Caco-2 (cell line): ENCODE measurements at regions of chr18 and their contacts with region 1.

Region 1: GRCh38 chr18:42053188-42053781 is 98.3 kb downstream of the PIK3C3 start:
- DNase-seq: peak in 1 of 2 experiments; percentile 22
- H3K4me3 ChIP-seq: no peak overlapping the region
- H3K4me3 Mint-ChIP-seq: no peak overlapping the region
- H3K27ac Mint-ChIP-seq: no peak overlapping the region
- H3K4me1 ChIP-seq: no peaks in the 10 kb centered on the region
- H3K4me1 Mint-ChIP-seq: no peaks in the 10 kb centered on the region
- H3K27me3 ChIP-seq: no peaks in the 10 kb centered on the region
- H3K27me3 Mint-ChIP-seq: no peaks in the 10 kb centered on the region
- CTCF ChIP-seq: peak; percentile 48 to 57

Region 2: GRCh38 chr18:42274488-42275137 is 221.3 kb after region 1 on chr18:
- CTCF ChIA-PET with region 1: no interaction called
- POLR2A ChIA-PET with region 1: no interaction called
- intact Hi-C with region 1: loop called (anchors 2 kb)
- DNase-seq: peak; percentile 31 to 32
- H3K4me3 ChIP-seq: no peak overlapping the region
- H3K4me3 Mint-ChIP-seq: no peak overlapping the region
- H3K27ac Mint-ChIP-seq: no peak overlapping the region
- H3K4me1 ChIP-seq: no peaks in the 10 kb centered on the region
- H3K4me1 Mint-ChIP-seq: peaks cover 7% of the 10 kb centered on the region
- H3K27me3 ChIP-seq: no peaks in the 10 kb centered on the region
- H3K27me3 Mint-ChIP-seq: no peaks in the 10 kb centered on the region
- CTCF ChIP-seq: peak in 1 of 2 experiments; percentile 22

Region 3: DNA sequence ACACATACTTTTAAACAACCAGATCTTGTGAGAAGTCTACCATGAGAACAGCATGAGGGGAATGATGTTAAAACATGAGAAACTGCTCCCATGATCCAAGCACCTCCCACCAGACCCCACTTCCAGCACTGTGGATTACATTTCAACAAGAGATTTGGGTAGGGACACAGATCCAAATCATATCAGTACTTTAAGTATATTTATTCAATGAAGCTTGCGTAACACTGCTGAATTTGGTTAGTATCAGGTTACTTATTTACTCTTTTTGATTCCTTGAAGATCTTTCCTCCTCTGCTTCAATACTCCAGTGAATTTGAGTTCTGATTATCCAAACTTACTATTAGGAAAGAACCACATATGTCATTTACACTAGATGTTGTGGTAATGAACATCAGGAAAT is 320.3 kb after region 1 on chr18:
- CTCF ChIA-PET with region 1: no interaction called
- POLR2A ChIA-PET with region 1: no interaction called
- intact Hi-C with region 1: no loop called
- DNase-seq: no peak
- H3K4me3 ChIP-seq: no peak overlapping the region
- H3K4me3 Mint-ChIP-seq: no peak overlapping the region
- H3K27ac Mint-ChIP-seq: no peak overlapping the region
- H3K4me1 ChIP-seq: no peaks in the 10 kb centered on the region
- H3K4me1 Mint-ChIP-seq: no peaks in the 10 kb centered on the region
- H3K27me3 ChIP-seq: no peaks in the 10 kb centered on the region
- H3K27me3 Mint-ChIP-seq: no peaks in the 10 kb centered on the region
- CTCF ChIP-seq: no peak

Region 4: GRCh38 chr18:43271593-43272432 is 1218.5 kb after region 1 on chr18:
- CTCF ChIA-PET with region 1: no interaction called
- POLR2A ChIA-PET with region 1: no interaction called
- intact Hi-C with region 1: loop called (anchors 5 kb)
- DNase-seq: peak in 1 of 2 experiments; percentile 28
- H3K4me3 ChIP-seq: no peak overlapping the region
- H3K4me3 Mint-ChIP-seq: no peak overlapping the region
- H3K27ac Mint-ChIP-seq: no peak overlapping the region
- H3K4me1 ChIP-seq: no peaks in the 10 kb centered on the region
- H3K4me1 Mint-ChIP-seq: no peaks in the 10 kb centered on the region
- H3K27me3 ChIP-seq: no peaks in the 10 kb centered on the region
- H3K27me3 Mint-ChIP-seq: peaks cover 3% of the 10 kb centered on the region
- CTCF ChIP-seq: peak; percentile 30 to 35

Region 5: GRCh38 chr18:43396266-43396665 is 1343.0 kb after region 1 on chr18:
- CTCF ChIA-PET with region 1: no interaction called
- POLR2A ChIA-PET with region 1: no interaction called
- intact Hi-C with region 1: loop called (anchors 2 kb)
- DNase-seq: no peak
- H3K4me3 ChIP-seq: no peak overlapping the region
- H3K4me3 Mint-ChIP-seq: no peak overlapping the region
- H3K27ac Mint-ChIP-seq: no peak overlapping the region
- H3K4me1 ChIP-seq: no peaks in the 10 kb centered on the region
- H3K4me1 Mint-ChIP-seq: no peaks in the 10 kb centered on the region
- H3K27me3 ChIP-seq: no peaks in the 10 kb centered on the region
- H3K27me3 Mint-ChIP-seq: no peaks in the 10 kb centered on the region
- CTCF ChIP-seq: peak in 1 of 2 experiments; percentile 2

Region 6: GRCh38 chr18:43563780-43564179 is 1510.5 kb after region 1 on chr18:
- CTCF ChIA-PET with region 1: no interaction called
- POLR2A ChIA-PET with region 1: no interaction called
- intact Hi-C with region 1: loop called (anchors 5 kb)
- DNase-seq: peak in 1 of 2 experiments; percentile 4
- H3K4me3 ChIP-seq: no peak overlapping the region
- H3K4me3 Mint-ChIP-seq: no peak overlapping the region
- H3K27ac Mint-ChIP-seq: no peak overlapping the region
- H3K4me1 ChIP-seq: no peaks in the 10 kb centered on the region
- H3K4me1 Mint-ChIP-seq: no peaks in the 10 kb centered on the region
- H3K27me3 ChIP-seq: no peaks in the 10 kb centered on the region
- H3K27me3 Mint-ChIP-seq: no peaks in the 10 kb centered on the region
- CTCF ChIP-seq: no peak